Left colon (tissue), 2 donors: ENCODE measurements at regions of chr18 and their contacts with region 1.

Region 1: DNA sequence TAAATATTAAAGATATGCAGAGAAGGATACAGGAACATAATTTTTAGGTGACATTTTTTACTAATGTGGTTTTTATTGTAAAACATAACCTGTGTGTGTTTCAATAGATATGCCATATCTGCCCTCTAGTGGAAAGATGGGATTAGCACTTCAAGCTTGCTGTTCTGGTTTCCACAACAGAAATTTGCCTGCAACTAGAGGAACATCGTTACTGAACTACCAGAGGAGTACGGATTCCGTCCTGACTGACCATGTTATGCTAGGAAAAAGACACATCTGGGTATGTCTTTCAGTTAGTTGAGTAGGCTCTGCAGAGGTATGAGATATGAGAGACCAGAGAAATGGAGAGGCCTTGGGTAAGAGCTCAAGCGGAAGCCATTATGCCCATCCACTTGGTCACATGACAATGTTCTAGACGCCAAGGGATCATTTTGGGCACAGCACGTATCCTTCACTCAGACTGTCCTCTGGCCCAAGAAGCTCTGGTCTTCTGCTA is 104.9 kb downstream of the MBD2 start:
- DNase-seq: no peak
- ATAC-seq: peak; percentile 70

Region 2: DNA sequence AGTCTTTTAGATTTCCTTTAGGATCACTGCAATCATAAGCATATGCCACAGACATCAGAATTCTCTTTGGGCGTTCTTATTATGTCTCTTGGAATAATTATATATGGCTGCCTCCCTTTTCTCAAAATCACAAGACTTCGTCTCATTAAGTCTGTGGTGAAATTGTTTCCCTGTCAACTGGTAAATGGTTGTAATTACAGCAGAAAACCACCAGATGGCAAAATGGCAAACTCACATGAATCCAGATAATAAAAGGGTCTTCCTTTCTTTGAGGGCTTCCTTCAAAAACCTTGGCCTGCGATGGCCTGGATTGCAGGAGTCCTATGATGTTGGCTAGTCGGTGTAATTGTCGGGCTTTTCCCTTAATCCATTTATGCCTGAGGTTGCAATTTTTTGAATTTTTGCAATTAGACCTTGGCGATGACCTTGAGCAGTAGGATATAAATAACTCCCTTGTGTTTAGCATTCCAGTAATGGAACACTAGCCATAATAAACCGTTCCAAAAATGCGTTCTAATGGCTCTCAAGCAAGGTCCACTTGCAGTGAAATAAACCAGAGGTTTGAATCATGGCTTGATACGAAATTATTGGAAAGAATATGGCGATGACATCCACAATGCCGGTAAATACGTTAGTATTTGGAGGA is 551.5 kb before region 1 on chr18:
- intact Hi-C with region 1: loop called in 1 of 2 experiments (anchors 10 kb)
- DNase-seq: no peak
- ATAC-seq: no peak

Region 3: GRCh38 chr18:53701697-53702096 is 417.9 kb before region 1 on chr18:
- intact Hi-C with region 1: loop called in 1 of 2 experiments (anchors 10 kb)
- DNase-seq: no peak
- ATAC-seq: no peak

Region 4: GRCh38 chr18:54023471-54023870 is 96.1 kb before region 1 on chr18:
- intact Hi-C with region 1: no loop called
- DNase-seq: no peak
- ATAC-seq: no peak

Region 5: DNA sequence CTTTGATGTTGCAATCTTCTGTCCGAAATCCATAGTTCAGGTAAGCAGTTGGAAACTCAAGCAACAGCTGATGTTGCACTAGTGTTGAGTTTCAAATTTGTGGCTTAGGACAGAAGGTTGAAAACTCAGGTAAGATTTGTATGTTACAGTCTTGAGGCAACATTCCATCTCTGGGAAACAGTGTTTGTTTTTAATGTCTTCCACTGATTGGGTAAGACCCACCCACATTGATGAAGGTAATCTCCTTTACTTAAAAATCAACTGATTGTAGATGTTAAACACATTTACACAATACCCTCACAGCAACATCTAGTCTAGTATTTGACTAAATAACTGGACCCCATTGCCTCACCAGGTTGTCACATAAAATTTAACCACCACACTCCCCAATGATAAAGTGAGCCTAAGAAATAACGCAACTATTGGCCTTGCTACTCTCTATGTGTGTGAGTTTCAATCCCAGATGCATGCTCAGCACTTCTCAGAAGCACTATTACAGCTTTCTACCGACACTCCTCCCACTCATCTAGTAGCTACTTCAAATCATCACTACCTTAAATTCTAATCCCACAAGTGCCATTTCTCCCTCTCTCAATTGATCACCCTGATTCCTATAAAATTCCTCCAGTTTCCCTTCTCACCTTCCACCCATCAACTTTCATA is 59.1 kb before region 1 on chr18:
- intact Hi-C with region 1: no loop called
- DNase-seq: no peak
- ATAC-seq: no peak